Heart right ventricle (tissue), 16 donors: ENCODE measurements at regions of chr6 and their contacts with region 1.

Region 1: DNA sequence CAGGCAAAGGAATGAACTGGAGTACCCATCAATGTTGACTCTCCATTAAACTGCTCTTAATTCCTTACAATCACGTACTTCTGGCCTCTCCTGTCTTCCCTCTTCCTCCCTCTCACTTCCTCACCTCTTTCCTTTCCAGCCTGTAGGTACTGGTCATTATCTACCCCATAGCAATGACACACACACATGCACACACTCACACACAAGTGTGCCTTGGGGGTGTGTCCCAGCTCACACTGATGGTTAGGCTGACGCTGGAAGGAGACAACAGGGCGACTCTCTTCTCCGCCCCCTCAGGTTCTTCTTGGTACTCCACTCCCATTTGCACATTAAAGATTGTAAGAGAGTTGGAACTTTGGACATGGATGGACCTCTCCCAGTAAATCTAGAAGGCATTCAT is 14.0 kb upstream of the SERPINB9 start:
- DNase-seq: no peak
- ATAC-seq: no peak
- H3K4me3 ChIP-seq: no peak overlapping the region
- H3K27ac ChIP-seq: no peak overlapping the region
- H3K4me1 ChIP-seq: peaks cover 0 to 16% (median 0%) of the 10 kb centered on the region in 9 donors
- H3K27me3 ChIP-seq: no peaks in the 10 kb centered on the region
- CTCF ChIP-seq: no peak

Region 2: DNA sequence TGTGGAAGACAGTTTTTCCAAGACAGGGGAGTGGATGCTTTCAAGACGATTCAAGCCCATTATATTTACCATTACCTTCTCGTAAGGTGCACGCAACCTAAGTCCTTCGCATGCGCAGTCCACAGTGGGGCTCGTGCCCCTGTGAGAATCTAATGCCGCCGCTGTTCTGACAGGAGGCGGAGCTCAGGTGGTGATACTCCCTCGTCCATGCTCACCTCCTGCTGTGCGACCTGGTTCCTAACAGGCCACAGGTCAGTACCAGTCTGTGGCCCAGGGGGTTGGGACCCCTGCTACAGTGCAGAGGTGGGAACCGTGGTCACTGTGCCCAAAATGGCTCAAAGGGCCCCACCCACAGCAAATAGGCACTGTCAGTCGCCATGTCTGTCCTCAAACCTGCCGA is 112.0 kb before region 1 on chr6:
- intact Hi-C with region 1: no loop called
- DNase-seq: no peak
- ATAC-seq: no peak
- H3K4me3 ChIP-seq: no peak overlapping the region
- H3K27ac ChIP-seq: no peak overlapping the region
- H3K4me1 ChIP-seq: peaks cover 3 to 58% (median 38%) of the 10 kb centered on the region in 9 donors
- H3K27me3 ChIP-seq: no peaks in the 10 kb centered on the region
- CTCF ChIP-seq: no peak

Region 3: GRCh38 chr6:2848851-2849250 is 68.2 kb before region 1 on chr6:
- intact Hi-C with region 1: loop called in 3 of 10 experiments (anchors 5 kb)
- DNase-seq: no peak
- ATAC-seq: no peak
- H3K4me3 ChIP-seq: no peak overlapping the region
- H3K27ac ChIP-seq: no peak overlapping the region
- H3K4me1 ChIP-seq: peaks cover 6 to 34% (median 22%) of the 10 kb centered on the region in 9 donors
- H3K27me3 ChIP-seq: no peaks in the 10 kb centered on the region
- CTCF ChIP-seq: no peak

Region 4: DNA sequence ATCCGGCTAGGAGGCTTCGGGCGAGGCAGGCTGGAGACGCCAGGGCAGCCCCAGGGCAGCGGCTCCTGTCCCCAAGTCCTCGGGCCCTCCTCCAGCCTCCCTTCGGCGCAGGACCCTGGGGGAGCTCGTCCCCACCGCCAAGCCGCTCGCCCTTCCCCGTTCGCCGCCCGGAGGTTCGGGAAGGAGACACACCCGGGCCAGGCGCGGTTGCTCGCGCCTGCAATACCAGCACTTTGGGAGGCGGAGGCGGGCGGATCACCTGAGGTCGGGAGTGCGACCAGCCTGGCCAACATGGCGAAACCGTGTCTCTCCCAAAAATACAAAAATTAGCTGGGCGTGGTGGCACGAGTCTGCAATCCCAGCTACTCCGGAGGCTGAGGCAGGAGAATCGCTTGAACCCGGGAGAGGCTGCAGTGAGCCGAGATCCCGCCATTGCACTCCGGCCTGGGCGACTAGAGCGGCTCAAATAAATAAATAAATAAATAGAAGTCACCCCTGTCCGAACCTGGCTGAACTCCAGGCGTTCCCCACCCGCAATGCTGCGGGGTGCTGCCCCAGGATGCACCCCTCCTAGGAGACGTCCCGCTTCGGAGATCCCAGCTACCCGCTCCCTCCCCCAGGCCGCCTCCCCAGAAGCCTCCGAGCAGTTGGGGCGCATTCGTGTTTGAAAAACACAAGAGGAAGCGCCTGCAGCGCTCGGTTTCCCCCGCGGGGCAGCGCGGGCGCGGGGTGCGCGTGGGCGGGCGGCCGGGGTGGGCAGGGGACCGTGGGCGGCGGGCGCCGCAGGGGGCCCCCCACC is 41.5 kb before region 1 on chr6:
- intact Hi-C with region 1: no loop called
- DNase-seq: peak; percentile 50 to 63
- ATAC-seq: peak; percentile 15 to 48 (median 42)
- H3K4me3 ChIP-seq: peak overlapping the region; percentile 47 to 82 (median 70)
- H3K27ac ChIP-seq: peak overlapping the region; percentile 61 to 97 (median 88)
- H3K4me1 ChIP-seq: peaks cover 3 to 45% (median 31%) of the 10 kb centered on the region in 9 donors
- H3K27me3 ChIP-seq: no peaks in the 10 kb centered on the region
- CTCF ChIP-seq: peak in 1 of 9 donors; percentile 16

Region 5: GRCh38 chr6:2986722-2987221 is 69.7 kb after region 1 on chr6:
- intact Hi-C with region 1: no loop called
- DNase-seq: no peak
- ATAC-seq: no peak
- H3K4me3 ChIP-seq: no peak overlapping the region
- H3K27ac ChIP-seq: peak overlapping the region in 4 of 10 donors; percentile 93 to 99 (median 97)
- H3K4me1 ChIP-seq: peaks cover 6 to 46% (median 29%) of the 10 kb centered on the region in 9 donors
- H3K27me3 ChIP-seq: no peaks in the 10 kb centered on the region
- CTCF ChIP-seq: no peak